AG04450 (cell line): ENCODE measurements at regions of chr16 and their contacts with region 1.

Region 1: DNA sequence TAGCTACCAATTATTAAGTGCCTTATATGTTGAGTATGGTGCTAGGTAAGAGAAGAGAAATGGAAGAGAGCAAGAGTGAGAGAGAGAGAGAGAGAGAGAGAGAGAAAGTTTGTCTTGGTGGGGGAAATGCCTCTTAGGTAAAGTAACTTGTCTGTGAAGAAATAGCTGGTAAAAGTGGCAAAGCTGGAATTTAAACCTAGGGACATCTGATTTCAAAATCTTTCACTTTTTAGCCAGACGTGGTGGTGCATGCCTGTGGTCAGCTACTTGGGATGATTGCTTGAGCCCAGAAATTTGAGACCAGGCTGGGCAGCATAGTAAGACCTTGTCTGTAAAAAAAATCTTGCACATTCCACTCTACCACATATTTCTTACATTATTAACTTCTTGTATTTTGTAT is 23.0 kb upstream of the CDR2 start:
- DNase-seq: peak; percentile 95
- H3K4me3 ChIP-seq: no peak overlapping the region
- H3K27ac ChIP-seq: peak overlapping the region; percentile 57
- H3K27me3 ChIP-seq: no peaks in the 10 kb centered on the region
- CTCF ChIP-seq: no peak

Region 2: GRCh38 chr16:22278441-22279236 is 118.8 kb before region 1 on chr16:
- CTCF ChIA-PET with region 1: no interaction called
- POLR2A ChIA-PET with region 1: no interaction called
- DNase-seq: no peak
- H3K4me3 ChIP-seq: no peak overlapping the region
- H3K27ac ChIP-seq: no peak overlapping the region
- H3K27me3 ChIP-seq: no peaks in the 10 kb centered on the region
- CTCF ChIP-seq: no peak

Region 3: DNA sequence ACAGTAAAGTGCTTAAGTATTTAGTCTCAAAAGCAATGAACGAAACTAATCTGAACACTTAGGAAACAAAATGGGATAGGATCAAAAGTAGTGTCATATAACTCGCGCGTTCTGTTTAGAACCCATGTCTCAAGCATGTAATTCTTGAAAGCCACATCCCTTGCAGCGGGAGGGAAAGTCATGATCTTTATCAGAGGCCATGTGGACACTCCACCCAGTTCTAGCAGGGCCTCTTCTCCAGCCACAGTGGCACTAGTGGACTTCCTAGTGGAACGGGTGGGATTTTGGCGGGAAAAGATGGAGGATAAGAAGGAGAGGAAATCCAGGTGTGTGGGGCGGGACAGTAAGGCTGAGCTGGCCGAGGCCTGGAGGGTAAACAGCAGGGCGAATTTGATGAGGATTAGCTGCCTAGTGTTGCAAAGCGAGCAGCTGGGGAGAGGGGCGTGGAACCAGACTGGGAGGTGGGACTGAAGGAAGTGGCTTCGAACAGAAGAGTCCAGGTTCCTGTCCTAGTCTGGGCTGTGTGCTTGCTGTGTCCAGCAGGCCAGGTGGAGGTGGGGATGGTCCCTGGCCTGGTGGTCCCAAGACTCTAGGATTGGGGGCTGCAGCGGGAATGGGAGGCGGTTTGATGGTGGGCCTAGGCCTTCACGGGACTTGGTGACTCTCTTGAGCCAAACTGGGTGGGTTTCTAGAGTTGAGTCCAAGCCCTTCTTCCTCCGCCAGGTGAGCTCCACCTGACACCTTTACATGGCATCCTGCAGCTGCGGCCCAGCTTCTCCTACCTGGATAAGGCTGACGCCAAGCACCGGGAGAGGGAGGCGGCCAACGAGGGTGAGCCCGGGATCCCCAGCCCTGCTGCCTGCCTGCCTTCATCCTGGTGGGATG is 84.3 kb before region 1 on chr16:
- CTCF ChIA-PET with region 1: no interaction called
- POLR2A ChIA-PET with region 1: no interaction called
- DNase-seq: no peak
- H3K4me3 ChIP-seq: no peak overlapping the region
- H3K27ac ChIP-seq: no peak overlapping the region
- H3K27me3 ChIP-seq: no peaks in the 10 kb centered on the region
- CTCF ChIP-seq: no peak

Region 4: DNA sequence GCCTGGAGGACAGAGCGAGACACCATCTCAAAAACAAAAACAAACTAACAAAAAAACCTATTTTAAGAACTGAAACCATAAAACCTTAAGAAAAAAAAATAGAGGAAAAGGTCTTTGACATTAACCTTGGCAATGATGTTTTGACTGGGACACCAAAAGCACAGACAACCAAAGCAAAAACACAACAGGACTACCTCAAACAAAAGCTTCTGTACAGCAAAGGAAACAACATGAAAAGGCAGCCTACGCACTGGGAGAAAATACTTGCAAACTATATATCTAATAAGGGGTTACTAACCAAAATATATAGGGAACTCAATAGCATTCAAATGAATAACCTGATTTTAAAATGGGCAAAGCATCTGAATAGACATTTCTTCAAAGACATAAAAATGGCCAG is 55.4 kb before region 1 on chr16:
- CTCF ChIA-PET with region 1: no interaction called
- POLR2A ChIA-PET with region 1: no interaction called
- DNase-seq: no peak
- H3K4me3 ChIP-seq: no peak overlapping the region
- H3K27ac ChIP-seq: no peak overlapping the region
- H3K27me3 ChIP-seq: no peaks in the 10 kb centered on the region
- CTCF ChIP-seq: no peak

Region 5: GRCh38 chr16:22353191-22353919 is 44.1 kb before region 1 on chr16:
- CTCF ChIA-PET with region 1: no interaction called
- POLR2A ChIA-PET with region 1: interaction called, 12 read pairs
- DNase-seq: peak; percentile 71
- H3K4me3 ChIP-seq: no peak overlapping the region
- H3K27ac ChIP-seq: peak overlapping the region; percentile 95
- H3K27me3 ChIP-seq: no peaks in the 10 kb centered on the region
- CTCF ChIP-seq: no peak

Region 6: DNA sequence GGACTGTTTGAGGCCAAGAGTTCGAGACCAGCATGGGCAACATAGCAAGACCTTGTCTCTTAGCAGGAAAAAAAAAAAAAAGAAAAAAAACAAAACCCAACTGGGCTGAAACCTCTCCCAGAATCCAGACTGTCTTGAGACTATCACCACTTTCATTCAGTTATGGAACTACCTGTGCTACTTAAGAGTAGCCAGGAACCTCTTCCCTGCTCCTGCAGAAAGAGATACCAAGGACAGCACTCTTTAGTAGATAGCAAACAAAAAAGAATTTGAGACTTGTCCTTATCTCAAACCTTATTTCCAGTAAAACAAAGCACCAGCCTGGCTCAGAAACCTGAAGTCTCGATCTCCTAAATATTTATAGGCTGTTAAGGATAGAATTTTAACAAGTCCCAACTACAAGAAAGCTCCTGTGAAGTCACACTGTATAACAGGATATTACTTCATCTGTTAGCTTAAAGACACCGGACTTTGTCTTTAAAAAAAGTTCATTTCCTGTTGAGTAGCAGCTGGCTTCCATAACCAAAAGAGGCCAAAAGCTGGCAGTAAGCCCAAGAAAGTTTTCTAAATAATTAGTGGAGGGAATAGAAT is 28.1 kb before region 1 on chr16:
- CTCF ChIA-PET with region 1: interaction called, 5 read pairs
- POLR2A ChIA-PET with region 1: interaction called, 36 read pairs
- DNase-seq: peak; percentile 39
- H3K4me3 ChIP-seq: peak overlapping the region; percentile 4
- H3K27ac ChIP-seq: peak overlapping the region; percentile 83
- H3K27me3 ChIP-seq: no peaks in the 10 kb centered on the region
- CTCF ChIP-seq: no peak

Region 7: GRCh38 chr16:22374311-22375116 is 22.9 kb before region 1 on chr16 and contains the start of gene CDR2:
- CTCF ChIA-PET with region 1: interaction called, 5 read pairs
- POLR2A ChIA-PET with region 1: interaction called, 36 read pairs
- DNase-seq: peak; percentile 93
- H3K4me3 ChIP-seq: peak within 1 kb of the TSS; percentile 91
- H3K27ac ChIP-seq: peak within 1 kb of the TSS; percentile 86
- H3K27me3 ChIP-seq: no peaks in the 10 kb centered on the region
- CTCF ChIP-seq: no peak
- polyA plus RNA-seq, gene CDR2: 128 and 138 TPM in 2 replicates

Region 8: DNA sequence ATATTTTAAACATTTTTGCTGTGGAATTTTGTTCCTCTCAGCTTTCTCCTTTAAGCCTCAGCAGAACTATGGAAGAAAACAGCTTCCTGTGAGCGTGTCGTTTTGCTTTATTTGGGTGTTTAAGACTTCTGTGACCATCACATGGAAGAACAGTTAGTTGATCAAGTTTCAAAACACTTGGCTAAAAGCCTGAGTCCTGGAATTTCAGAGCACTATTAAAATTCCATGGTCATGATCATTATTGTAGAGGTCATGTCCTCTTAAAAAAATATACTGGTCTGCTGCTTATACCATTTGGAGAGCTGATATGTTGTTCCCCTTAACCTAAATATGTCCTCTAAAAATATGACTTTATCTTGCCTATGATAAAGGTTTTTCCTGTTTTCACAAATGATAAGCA is 10.5 kb before region 1 on chr16:
- CTCF ChIA-PET with region 1: no interaction called
- POLR2A ChIA-PET with region 1: interaction called, 43 read pairs
- DNase-seq: peak; percentile 78
- H3K4me3 ChIP-seq: no peak overlapping the region
- H3K27ac ChIP-seq: no peak overlapping the region
- H3K27me3 ChIP-seq: no peaks in the 10 kb centered on the region
- CTCF ChIP-seq: no peak

Region 9: GRCh38 chr16:22413819-22414218 is 16.4 kb after region 1 on chr16:
- CTCF ChIA-PET with region 1: no interaction called
- POLR2A ChIA-PET with region 1: no interaction called
- DNase-seq: no peak
- H3K4me3 ChIP-seq: no peak overlapping the region
- H3K27ac ChIP-seq: no peak overlapping the region
- H3K27me3 ChIP-seq: no peaks in the 10 kb centered on the region
- CTCF ChIP-seq: no peak